SK-N-SH (cell line): ENCODE measurements at regions of chr14 and their contacts with region 1.

Region 1: DNA sequence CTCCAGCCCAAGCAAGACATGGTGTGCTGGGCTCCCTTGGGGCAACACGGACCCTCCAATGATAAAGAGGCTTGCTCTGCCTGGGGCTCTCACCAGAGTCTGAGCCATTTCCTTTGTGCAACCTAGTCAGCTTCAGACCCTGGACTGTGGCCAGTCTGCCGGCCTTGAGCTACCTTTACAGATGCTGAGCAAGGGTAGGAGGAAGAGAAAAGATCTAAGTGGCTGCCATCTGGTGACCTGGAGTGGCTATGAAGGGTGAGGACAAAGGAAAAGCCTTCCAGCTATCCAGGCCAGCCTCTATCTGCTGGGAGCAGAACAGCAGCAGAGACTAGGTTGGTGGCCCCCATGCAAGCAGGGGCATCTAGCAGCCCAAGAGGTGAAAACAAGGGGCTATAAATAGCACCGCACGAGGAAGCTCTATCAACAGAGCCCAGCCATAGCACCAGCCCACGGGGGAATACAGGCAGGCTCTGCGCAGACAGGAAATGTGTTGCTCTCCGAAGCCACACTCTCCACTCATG is 230.1 kb downstream of the FOXN3 start:
- DNase-seq: no peak
- H3K4me3 ChIP-seq: no peak overlapping the region
- H3K27ac ChIP-seq: peak overlapping the region in 1 of 2 experiments; percentile 70; a peak in 2 of 4 replicates
- H3K4me1 ChIP-seq: peaks cover 0 to 32% of the 10 kb centered on the region in 2 experiments; a peak in 2 of 4 replicates
- H3K27me3 ChIP-seq: no peaks in the 10 kb centered on the region
- CTCF ChIP-seq: no peak
- EP300 ChIP-seq: no peak
- RAD21 ChIP-seq: no peak

Region 2: DNA sequence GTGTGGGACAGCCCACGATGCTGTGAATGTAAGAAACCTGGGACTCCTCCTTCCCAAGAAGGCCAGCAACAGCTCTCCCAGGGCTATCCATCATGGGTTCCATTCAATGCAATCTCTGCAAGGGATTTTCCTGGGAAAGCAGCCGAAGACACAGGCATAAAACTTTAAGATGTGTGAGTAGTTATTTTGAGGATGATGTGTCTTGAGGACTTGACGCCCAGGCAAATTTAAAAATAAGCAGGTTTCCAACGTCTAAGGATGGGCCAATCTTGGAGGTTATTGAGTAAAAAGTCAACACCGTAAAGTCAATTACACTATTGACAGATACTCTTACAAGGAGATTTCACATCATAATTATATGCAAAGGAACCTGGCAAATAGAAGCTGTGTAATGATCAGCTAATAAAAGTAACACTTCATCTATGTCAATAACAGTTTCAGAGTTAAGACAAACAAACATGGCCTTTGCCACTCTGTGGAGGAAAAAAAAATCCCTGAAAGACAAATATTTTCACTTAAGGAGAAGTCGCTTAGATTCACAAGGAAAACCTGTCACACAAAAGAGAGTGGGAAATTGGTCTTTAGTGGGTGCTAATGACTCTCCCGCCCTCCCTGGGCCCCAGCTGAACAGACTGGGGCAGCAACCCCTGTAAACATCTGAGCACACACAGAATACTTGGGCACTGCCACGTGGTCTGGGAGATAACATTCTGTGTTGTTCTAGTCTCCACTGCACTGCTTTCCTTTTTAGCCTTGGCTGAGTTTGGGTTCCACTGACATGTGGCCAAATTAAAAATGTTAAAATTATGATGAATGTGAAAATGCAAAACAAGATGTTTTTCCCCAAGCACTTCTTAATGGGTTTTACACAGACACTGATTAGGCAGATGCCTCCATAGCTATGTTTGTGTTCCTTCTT is 10.8 kb before region 1 on chr14:
- CTCF ChIA-PET with region 1: interaction called, 16 read pairs
- POLR2A ChIA-PET with region 1: no interaction called
- DNase-seq: no peak
- H3K4me3 ChIP-seq: no peak overlapping the region
- H3K27ac ChIP-seq: no peak overlapping the region
- H3K4me1 ChIP-seq: peaks cover 0 to 8% of the 10 kb centered on the region in 2 experiments; a peak in 1 of 4 replicates
- H3K27me3 ChIP-seq: no peaks in the 10 kb centered on the region
- CTCF ChIP-seq: no peak
- EP300 ChIP-seq: no peak
- RAD21 ChIP-seq: no peak

Region 3: GRCh38 chr14:89270439-89271227 is 83.7 kb after region 1 on chr14:
- CTCF ChIA-PET with region 1: no interaction called
- POLR2A ChIA-PET with region 1: no interaction called
- DNase-seq: no peak
- H3K4me3 ChIP-seq: no peak overlapping the region
- H3K27ac ChIP-seq: no peak overlapping the region
- H3K4me1 ChIP-seq: peaks cover 4 to 34% of the 10 kb centered on the region in 2 experiments; a peak in 2 of 4 replicates
- H3K27me3 ChIP-seq: no peaks in the 10 kb centered on the region
- CTCF ChIP-seq: no peak
- EP300 ChIP-seq: no peak
- RAD21 ChIP-seq: no peak

Region 4: DNA sequence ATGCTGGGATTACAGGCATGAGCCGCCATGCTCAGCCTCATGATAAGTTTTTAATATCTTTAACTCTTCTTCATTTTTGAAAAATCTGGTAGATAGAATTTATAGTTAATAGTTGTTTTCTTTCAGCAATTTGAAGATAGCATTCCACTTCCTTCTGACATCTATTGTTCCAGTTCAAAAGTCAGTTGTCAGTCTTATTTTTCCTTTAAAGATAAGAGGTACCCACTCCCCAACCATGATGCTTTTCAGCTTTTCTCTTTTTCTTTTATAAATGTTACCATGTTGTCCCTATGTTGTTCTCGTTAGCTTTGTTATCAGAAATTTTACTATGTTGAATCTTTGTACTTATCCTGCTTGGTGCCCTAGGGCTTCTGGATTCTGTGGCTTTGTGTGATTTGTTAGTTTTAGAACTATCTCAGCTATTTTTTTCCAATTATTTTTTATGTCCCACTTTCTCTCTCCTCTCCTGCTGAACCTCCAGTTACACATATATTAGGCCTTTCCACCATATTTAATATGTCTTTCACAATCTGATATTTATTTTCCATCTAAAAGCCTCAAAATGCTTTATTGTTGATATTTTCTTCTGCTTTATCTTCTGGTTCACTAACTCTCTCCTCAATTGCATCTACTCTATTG is 411.8 kb after region 1 on chr14:
- CTCF ChIA-PET with region 1: no interaction called
- POLR2A ChIA-PET with region 1: no interaction called
- DNase-seq: no peak
- H3K4me3 ChIP-seq: no peak overlapping the region
- H3K27ac ChIP-seq: no peak overlapping the region
- H3K4me1 ChIP-seq: no peaks in the 10 kb centered on the region
- H3K27me3 ChIP-seq: no peaks in the 10 kb centered on the region
- CTCF ChIP-seq: no peak
- EP300 ChIP-seq: no peak
- RAD21 ChIP-seq: no peak